ENCODE measurements at regions of chrX and their contacts with region 1.

Region 1: GRCh38 chrX:151151665-151152267 is 24.6 kb upstream of the GPR50 start:
- DNase-seq: no peak
- H3K4me3 ChIP-seq: no peak overlapping the region
- H3K27ac ChIP-seq: no peak overlapping the region
- H3K4me1 ChIP-seq: no peaks in the 10 kb centered on the region
- H3K27me3 ChIP-seq: peaks cover 0 to 25% (median 0%) of the 10 kb centered on the region in 7 donors
- CTCF ChIP-seq: peak; percentile 20 to 80 (median 66)
- POLR2A ChIP-seq: no peak

Region 2: GRCh38 chrX:151206871-151207270 is 55.1 kb after region 1 on chrX:
- intact Hi-C with region 1: no loop called
- DNase-seq: no peak
- H3K4me3 ChIP-seq: no peak overlapping the region
- H3K27ac ChIP-seq: no peak overlapping the region
- H3K4me1 ChIP-seq: no peaks in the 10 kb centered on the region
- H3K27me3 ChIP-seq: no peaks in the 10 kb centered on the region
- CTCF ChIP-seq: no peak
- POLR2A ChIP-seq: no peak

Region 3: GRCh38 chrX:151680805-151681204 is 529.0 kb after region 1 on chrX:
- intact Hi-C with region 1: loop called (anchors 5 kb)
- DNase-seq: no peak
- H3K4me3 ChIP-seq: no peak overlapping the region
- H3K27ac ChIP-seq: no peak overlapping the region
- H3K4me1 ChIP-seq: no peaks in the 10 kb centered on the region
- H3K27me3 ChIP-seq: peaks cover 0 to 11% (median 0%) of the 10 kb centered on the region in 7 donors
- CTCF ChIP-seq: peak; percentile 31 to 70 (median 61)
- POLR2A ChIP-seq: no peak